CD8-positive, alpha-beta memory T cell (primary cell): ENCODE measurements at regions of chr9 and their contacts with region 1.

Region 1: GRCh38 chr9:98807070-98807810 is at the start of gene GALNT12:
- DNase-seq: peak; percentile 42 to 70 (median 55)
- H3K4me3 ChIP-seq: peak within 1 kb of the TSS; percentile 62
- H3K4me3 Mint-ChIP-seq: peak within 1 kb of the TSS; percentile 87 to 94 (median 90)
- H3K27ac ChIP-seq: peak within 1 kb of the TSS; percentile 49
- H3K27ac Mint-ChIP-seq: peak within 1 kb of the TSS in 6 of 8 donors; percentile 2 to 85 (median 38)
- H3K4me1 ChIP-seq: peaks cover 22% of the 10 kb centered on the region
- H3K4me1 Mint-ChIP-seq: peaks cover 21 to 44% (median 39%) of the 10 kb centered on the region in 3 donors
- H3K27me3 ChIP-seq: no peaks in the 10 kb centered on the region
- H3K27me3 Mint-ChIP-seq: peaks cover 7 to 9% of the 10 kb centered on the region in 2 donors
- total RNA-seq, gene GALNT12: 4.7 to 4.9 TPM

Region 2: DNA sequence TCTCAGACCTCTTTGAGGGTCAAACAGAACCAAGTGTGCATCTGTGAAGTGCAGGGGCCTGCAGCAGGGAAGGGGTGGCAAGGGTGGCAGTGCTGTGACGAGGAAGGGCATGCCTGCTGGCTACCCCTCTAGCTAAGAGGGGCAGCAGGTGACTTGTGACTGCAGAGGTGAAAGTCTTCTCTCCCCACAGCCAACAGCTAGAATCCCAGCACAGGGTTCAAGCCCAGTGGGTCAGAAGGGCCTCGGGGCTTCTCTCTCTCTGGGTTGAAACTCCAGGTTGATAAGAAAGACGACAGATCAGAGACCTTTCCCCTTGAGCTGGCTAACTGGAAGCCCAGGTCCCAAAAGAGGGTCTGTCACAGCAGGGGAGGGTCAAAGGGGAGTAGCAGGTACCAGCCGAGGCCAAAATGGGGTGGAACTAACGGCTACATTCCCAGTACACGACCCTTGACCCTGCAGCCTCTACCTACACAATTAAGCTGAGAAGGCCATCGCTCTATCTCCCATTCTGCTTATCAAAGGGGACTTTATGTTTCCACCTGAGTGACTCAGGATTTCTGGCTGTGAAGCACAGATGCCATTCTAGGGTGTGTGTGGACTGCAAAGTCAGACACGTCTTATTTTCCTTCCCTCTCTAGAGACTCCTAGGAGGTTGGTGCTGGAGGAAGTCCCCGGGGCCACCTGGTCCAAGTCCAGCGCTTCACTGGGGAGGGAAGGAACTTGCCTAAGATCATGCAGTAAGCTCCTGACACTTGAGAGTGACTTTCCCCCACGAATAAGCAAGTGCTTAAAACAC is 25.5 kb before region 1 on chr9:
- CTCF ChIA-PET with region 1: no interaction called
- POLR2A ChIA-PET with region 1: no interaction called
- DNase-seq: no peak
- H3K4me3 ChIP-seq: no peak overlapping the region
- H3K4me3 Mint-ChIP-seq: no peak overlapping the region
- H3K27ac ChIP-seq: no peak overlapping the region
- H3K27ac Mint-ChIP-seq: no peak overlapping the region
- H3K4me1 ChIP-seq: no peaks in the 10 kb centered on the region
- H3K4me1 Mint-ChIP-seq: no peaks in the 10 kb centered on the region
- H3K27me3 ChIP-seq: no peaks in the 10 kb centered on the region
- H3K27me3 Mint-ChIP-seq: peaks cover 0 to 1% of the 10 kb centered on the region in 2 donors

Region 3: GRCh38 chr9:98796364-98797101 is 10.7 kb before region 1 on chr9 and contains the start of gene ANKS6:
- CTCF ChIA-PET with region 1: interaction called, 14 read pairs
- POLR2A ChIA-PET with region 1: interaction called, 8 read pairs
- DNase-seq: peak; percentile 77 to 86 (median 80)
- H3K4me3 ChIP-seq: peak within 1 kb of the TSS; percentile 79
- H3K4me3 Mint-ChIP-seq: peak within 1 kb of the TSS; percentile 86 to 94 (median 88)
- H3K27ac ChIP-seq: peak within 1 kb of the TSS; percentile 33
- H3K27ac Mint-ChIP-seq: peak within 1 kb of the TSS; percentile 46 to 88 (median 78)
- H3K4me1 ChIP-seq: peaks cover 9% of the 10 kb centered on the region
- H3K4me1 Mint-ChIP-seq: peaks cover 26 to 39% (median 30%) of the 10 kb centered on the region in 3 donors
- H3K27me3 ChIP-seq: no peaks in the 10 kb centered on the region
- H3K27me3 Mint-ChIP-seq: peaks cover 0 to 5% of the 10 kb centered on the region in 2 donors
- total RNA-seq, gene ANKS6: 16.8 to 17.5 TPM